ENCODE measurements at regions of chr1 and their contacts with region 1.

Region 1: DNA sequence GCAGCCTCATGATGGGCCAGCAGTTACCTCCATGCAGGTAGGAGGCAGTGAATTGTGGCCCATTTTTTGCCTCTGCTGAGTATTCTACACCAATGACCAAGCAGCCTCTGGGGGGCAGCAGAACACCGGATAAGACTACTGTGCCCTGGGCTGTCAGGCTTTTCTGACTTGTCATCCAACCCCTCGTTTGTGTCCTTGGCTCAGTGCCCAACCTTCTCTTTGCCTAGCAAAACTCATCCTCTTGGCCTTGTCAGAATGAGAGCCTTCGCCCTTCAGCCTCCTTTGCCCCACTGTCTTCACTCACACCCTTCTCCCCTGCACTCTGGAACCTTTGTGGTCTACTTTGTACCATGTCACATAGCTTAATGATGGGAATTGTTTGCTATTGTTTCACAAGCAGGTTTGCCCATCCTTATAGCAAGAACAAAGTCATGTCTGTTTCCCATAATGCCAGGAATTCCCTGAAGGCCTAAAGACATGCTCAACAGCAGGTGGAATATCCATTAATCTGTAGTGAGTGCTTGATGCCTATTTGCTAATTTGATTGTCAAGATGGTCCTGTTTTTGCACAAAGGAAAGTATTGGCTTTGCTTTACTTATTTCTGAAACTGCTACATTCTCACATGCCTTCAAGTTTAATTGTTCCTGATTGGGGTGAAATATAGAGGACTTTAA is 255.9 kb downstream of the HHAT start:
- DNase-seq: peak; percentile 91 to 93
- H3K4me3 ChIP-seq: no peak overlapping the region
- H3K27ac ChIP-seq: no peak overlapping the region
- H3K4me1 ChIP-seq: no peaks in the 10 kb centered on the region
- H3K27me3 ChIP-seq: no peaks in the 10 kb centered on the region
- CTCF ChIP-seq: peak in 5 of 6 experiments; percentile 53 to 94 (median 69)
- POLR2A ChIP-seq: no peak

Region 2: DNA sequence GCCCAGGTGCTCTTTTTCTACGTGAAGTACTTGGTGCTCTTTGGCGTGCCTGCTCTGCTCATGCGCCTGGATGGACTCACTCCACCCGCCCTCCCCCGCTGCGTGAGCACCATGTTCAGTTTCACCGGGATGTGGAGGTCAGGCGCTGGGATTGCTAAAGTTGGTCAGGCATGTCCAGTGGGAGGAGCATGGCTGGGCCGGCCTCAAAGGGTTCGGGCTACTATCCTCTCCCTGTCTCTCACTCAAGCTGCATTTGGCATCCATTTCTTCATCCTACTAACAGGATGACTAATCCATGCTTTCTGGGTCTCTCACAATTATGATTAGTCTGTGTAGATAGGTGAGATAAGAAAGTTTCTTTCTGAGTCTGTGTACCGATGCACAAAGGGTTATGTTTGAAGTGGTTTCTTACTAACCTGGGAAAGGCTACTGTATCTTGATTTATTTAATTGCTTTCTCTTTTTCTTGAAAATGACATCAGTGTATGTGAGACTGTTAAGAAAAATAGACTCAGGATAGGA is 120.0 kb before region 1 on chr1:
- intact Hi-C with region 1: no loop called
- DNase-seq: peak; percentile 71 to 82
- H3K4me3 ChIP-seq: no peak overlapping the region
- H3K27ac ChIP-seq: no peak overlapping the region
- H3K4me1 ChIP-seq: no peaks in the 10 kb centered on the region
- H3K27me3 ChIP-seq: no peaks in the 10 kb centered on the region
- CTCF ChIP-seq: no peak
- POLR2A ChIP-seq: no peak

Region 3: DNA sequence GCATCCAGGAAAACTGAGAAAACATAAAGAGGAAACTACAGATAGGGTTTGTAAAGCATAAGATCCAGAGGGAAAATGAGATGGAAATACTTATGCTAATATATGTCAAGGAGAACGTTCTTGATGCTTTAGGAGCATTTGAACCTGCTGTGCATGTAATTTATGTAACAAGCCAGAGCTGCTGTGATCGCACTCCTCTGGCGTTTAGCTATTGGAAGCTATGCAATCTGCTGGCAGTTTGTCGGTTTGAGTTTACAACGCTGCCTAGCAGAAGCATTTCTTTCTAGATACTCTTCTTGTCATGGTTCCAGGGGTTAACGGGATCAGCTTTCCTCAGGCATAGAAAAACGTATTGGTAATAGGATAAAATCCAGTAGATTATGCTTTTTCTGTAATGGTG is 366.7 kb after region 1 on chr1:
- intact Hi-C with region 1: loop called (anchors 5 kb)
- DNase-seq: no peak
- H3K4me3 ChIP-seq: no peak overlapping the region
- H3K27ac ChIP-seq: no peak overlapping the region
- H3K4me1 ChIP-seq: no peaks in the 10 kb centered on the region
- H3K27me3 ChIP-seq: no peaks in the 10 kb centered on the region
- CTCF ChIP-seq: no peak
- POLR2A ChIP-seq: no peak

Region 4: GRCh38 chr1:211133836-211134669 is 549.5 kb after region 1 on chr1 and contains the start of gene KCNH1:
- intact Hi-C with region 1: loop called (anchors 10 kb)
- DNase-seq: peak; percentile 80
- H3K4me3 ChIP-seq: peak within 1 kb of the TSS in 2 of 3 donors; percentile 5 to 16
- H3K27ac ChIP-seq: no peak within 1 kb of the TSS
- H3K4me1 ChIP-seq: peaks cover 6 to 10% of the 10 kb centered on the region in 2 donors
- H3K27me3 ChIP-seq: no peaks in the 10 kb centered on the region
- CTCF ChIP-seq: peak; percentile 33 to 98 (median 90)
- POLR2A ChIP-seq: no peak
- total RNA-seq, gene KCNH1: 1.3 TPM in 2 of 4 donors, not detected in the others